Activated CD4-positive, alpha-beta T cell treated with anti-CD3 and anti-CD28 coated beads, Interleukin-2, amount 10 ng/mL, durations not matched to agents 24 days and 14 days (primary cell): ENCODE measurements at regions of chr6 and their contacts with region 1.

Region 1: GRCh38 chr6:118618679-118619377 is 32.6 kb downstream of the CEP85L start:
- DNase-seq: peak; percentile 86
- H3K4me3 Mint-ChIP-seq: no peak overlapping the region
- H3K27ac Mint-ChIP-seq: peak overlapping the region; percentile 9
- H3K4me1 Mint-ChIP-seq: peaks cover 28% of the 10 kb centered on the region
- H3K27me3 Mint-ChIP-seq: no peaks in the 10 kb centered on the region

Region 2: GRCh38 chr6:118589186-118589585 is 29.6 kb before region 1 on chr6:
- intact Hi-C with region 1: loop called (anchors 2 kb)
- DNase-seq: no peak
- H3K4me3 Mint-ChIP-seq: no peak overlapping the region
- H3K27ac Mint-ChIP-seq: no peak overlapping the region
- H3K4me1 Mint-ChIP-seq: peaks cover 6% of the 10 kb centered on the region
- H3K27me3 Mint-ChIP-seq: no peaks in the 10 kb centered on the region

Region 3: GRCh38 chr6:119552021-119552420 is 933.2 kb after region 1 on chr6:
- intact Hi-C with region 1: no loop called
- DNase-seq: no peak
- H3K4me3 Mint-ChIP-seq: no peak overlapping the region
- H3K27ac Mint-ChIP-seq: no peak overlapping the region
- H3K4me1 Mint-ChIP-seq: no peaks in the 10 kb centered on the region
- H3K27me3 Mint-ChIP-seq: peaks cover 28% of the 10 kb centered on the region